Activated CD4-positive, alpha-beta memory T cell treated with anti-CD3 and anti-CD28 coated beads for 36 hours (primary cell): ENCODE measurements at regions of chr14 and their contacts with region 1.

Region 1: GRCh38 chr14:90970167-90970600 is 90.3 kb downstream of the RPS6KA5 start:
- DNase-seq: no peak
- H3K4me3 Mint-ChIP-seq: peak overlapping the region; percentile 48
- H3K27ac Mint-ChIP-seq: peak overlapping the region; percentile 88
- H3K4me1 Mint-ChIP-seq: peaks cover 50% of the 10 kb centered on the region
- H3K27me3 Mint-ChIP-seq: no peaks in the 10 kb centered on the region

Region 2: GRCh38 chr14:90827916-90828610 is 142.1 kb before region 1 on chr14:
- CTCF ChIA-PET with region 1: no interaction called
- POLR2A ChIA-PET with region 1: no interaction called
- intact Hi-C with region 1: loop called (anchors 2 kb)
- DNase-seq: peak; percentile 96
- H3K4me3 Mint-ChIP-seq: peak overlapping the region; percentile 80
- H3K27ac Mint-ChIP-seq: peak overlapping the region; percentile 88
- H3K4me1 Mint-ChIP-seq: peaks cover 21% of the 10 kb centered on the region
- H3K27me3 Mint-ChIP-seq: no peaks in the 10 kb centered on the region

Region 3: GRCh38 chr14:90959344-90959743 is 10.8 kb before region 1 on chr14:
- CTCF ChIA-PET with region 1: interaction called, 7 read pairs
- POLR2A ChIA-PET with region 1: interaction called, 16 read pairs
- intact Hi-C with region 1: loop called (anchors 1 kb)
- DNase-seq: no peak
- H3K4me3 Mint-ChIP-seq: no peak overlapping the region
- H3K27ac Mint-ChIP-seq: no peak overlapping the region
- H3K4me1 Mint-ChIP-seq: peaks cover 18% of the 10 kb centered on the region
- H3K27me3 Mint-ChIP-seq: no peaks in the 10 kb centered on the region

Region 4: GRCh38 chr14:91021991-91022621 is 51.9 kb after region 1 on chr14:
- CTCF ChIA-PET with region 1: no interaction called
- POLR2A ChIA-PET with region 1: interaction called, 6 read pairs
- intact Hi-C with region 1: loop called (anchors 1 kb)
- DNase-seq: no peak
- H3K4me3 Mint-ChIP-seq: peak overlapping the region; percentile 54
- H3K27ac Mint-ChIP-seq: peak overlapping the region; percentile 86
- H3K4me1 Mint-ChIP-seq: peaks cover 65% of the 10 kb centered on the region
- H3K27me3 Mint-ChIP-seq: no peaks in the 10 kb centered on the region

Region 5: GRCh38 chr14:91114079-91115065 is 144.2 kb after region 1 on chr14:
- CTCF ChIA-PET with region 1: interaction called, 6 read pairs
- POLR2A ChIA-PET with region 1: interaction called, 25 read pairs
- intact Hi-C with region 1: loop called (anchors 1 kb)
- DNase-seq: peak; percentile 81
- H3K4me3 Mint-ChIP-seq: peak overlapping the region; percentile 83
- H3K27ac Mint-ChIP-seq: peak overlapping the region; percentile 94
- H3K4me1 Mint-ChIP-seq: peaks cover 66% of the 10 kb centered on the region
- H3K27me3 Mint-ChIP-seq: no peaks in the 10 kb centered on the region

Region 6: DNA sequence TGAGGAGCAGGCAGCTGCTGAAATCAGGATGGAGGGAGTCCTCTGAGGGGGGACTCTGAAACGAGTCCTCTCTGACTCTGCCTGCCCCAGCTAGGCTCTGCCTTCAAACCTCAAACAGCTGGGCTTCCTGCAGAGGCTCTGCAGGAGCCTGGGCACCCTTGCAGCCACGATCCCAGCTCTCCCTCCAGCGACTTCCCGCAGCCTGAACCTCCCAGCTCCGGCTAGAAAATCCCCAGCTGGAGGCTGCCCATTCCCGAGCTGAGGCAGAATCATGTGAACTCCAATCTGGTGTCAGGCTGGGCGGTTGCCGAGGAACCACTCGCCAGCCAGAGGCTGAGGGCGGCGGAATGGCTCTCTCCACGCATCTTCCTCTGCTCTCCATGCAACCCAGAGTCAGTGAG is 274.3 kb after region 1 on chr14 and contains the start of gene GPR68:
- CTCF ChIA-PET with region 1: interaction called, 3 read pairs
- POLR2A ChIA-PET with region 1: interaction called, 8 read pairs
- intact Hi-C with region 1: loop called (anchors 1 kb)
- DNase-seq: peak; percentile 51
- H3K4me3 Mint-ChIP-seq: peak within 1 kb of the TSS; percentile 73
- H3K27ac Mint-ChIP-seq: peak within 1 kb of the TSS; percentile 84
- H3K4me1 Mint-ChIP-seq: peaks cover 93% of the 10 kb centered on the region
- H3K27me3 Mint-ChIP-seq: no peaks in the 10 kb centered on the region
- total RNA-seq, gene GPR68: 6.5 to 6.9 TPM